Posterior cingulate gyrus (tissue), 11 donors: ENCODE measurements at regions of chr19 and their contacts with region 1.

Region 1: DNA sequence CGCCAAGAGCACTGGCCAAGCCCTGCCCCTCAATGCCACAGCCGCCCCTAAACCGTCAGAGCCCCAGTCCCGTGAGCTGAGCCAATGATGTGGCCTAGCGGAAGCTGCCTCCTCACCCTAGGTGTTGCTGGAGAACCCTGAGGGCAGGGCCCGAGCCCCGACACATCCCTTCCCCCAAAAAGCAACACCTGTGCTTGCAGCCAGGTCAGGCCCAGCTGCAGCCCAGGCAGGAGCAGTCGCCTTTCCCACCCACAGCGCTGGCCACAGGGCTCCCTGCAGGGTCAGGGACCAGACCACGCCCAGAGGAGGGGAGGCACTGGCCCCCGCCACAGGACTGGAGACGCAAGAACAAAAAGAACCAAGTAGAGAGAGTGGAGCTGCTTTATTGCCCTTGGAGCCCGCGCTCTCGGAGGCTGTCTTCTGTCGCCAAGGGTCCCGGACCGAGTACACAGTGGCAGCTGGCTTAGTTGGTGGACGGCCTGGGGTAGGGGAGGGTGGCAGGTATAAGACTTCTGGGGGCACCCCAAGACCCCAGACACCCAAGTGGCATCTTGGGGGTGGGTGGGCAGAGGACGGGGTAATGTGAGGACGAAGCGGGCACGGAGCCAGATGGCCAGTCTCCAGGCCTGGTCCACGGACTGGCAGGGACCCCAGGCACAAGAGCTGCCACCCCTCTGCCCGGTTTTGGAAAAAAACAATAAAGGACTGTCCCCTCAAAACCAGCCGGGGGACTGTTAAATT is 3.3 kb downstream of the P2RY11 start:
- DNase-seq: peak in 1 of 10 donors; percentile 79

Region 2: DNA sequence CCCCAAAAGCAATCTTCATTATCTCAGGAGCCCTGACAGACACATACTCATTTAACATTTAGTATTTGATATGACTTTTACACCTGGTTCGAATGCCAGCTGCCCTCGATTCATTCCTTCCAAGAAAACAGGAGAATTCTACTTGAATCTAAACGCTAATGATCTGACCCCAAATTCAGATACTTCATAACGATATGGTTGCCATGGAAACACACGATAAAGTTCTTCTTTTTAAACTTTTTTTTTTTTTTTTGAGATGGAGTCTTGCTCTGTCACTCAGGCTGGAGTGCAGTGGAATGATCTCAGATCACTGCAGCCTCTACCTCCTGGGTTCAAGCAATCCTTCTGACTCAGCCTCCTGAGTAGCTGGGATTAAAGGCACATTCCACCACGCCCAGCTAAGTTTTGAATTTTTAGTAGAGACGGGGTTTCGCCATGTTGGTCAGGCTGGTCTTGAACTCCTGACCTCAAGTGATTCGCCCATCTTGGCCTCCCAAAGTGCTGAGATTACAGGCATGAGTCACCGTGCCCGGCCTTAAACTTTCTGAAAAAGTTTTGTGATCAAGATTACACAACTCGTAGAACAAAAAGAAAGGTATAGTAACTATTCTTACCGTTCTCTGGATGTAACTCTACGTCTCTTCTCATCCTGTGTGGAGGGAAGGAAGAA is 58.6 kb after region 1 on chr19:
- intact Hi-C with region 1: no loop called
- DNase-seq: no peak

Region 3: DNA sequence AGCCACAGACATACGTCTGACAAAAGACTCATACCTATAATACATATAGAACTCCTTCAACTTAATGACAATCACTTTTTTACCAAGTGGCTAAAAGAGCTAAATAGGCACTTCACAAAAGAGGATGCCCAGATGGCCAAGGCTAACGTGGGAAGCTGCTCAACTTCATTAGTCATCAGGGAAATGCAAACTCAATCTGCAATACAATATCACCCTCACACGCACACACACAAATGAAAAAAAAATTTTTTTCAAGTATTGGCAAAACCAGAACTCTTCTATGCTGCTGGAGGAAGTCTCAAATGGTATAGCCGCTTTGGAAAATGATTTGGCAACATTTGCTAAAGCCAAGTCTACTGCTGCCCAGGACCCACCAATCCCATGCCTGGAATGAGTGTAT is 94.5 kb after region 1 on chr19:
- intact Hi-C with region 1: no loop called
- DNase-seq: peak in 1 of 10 donors; percentile 8

Region 4: DNA sequence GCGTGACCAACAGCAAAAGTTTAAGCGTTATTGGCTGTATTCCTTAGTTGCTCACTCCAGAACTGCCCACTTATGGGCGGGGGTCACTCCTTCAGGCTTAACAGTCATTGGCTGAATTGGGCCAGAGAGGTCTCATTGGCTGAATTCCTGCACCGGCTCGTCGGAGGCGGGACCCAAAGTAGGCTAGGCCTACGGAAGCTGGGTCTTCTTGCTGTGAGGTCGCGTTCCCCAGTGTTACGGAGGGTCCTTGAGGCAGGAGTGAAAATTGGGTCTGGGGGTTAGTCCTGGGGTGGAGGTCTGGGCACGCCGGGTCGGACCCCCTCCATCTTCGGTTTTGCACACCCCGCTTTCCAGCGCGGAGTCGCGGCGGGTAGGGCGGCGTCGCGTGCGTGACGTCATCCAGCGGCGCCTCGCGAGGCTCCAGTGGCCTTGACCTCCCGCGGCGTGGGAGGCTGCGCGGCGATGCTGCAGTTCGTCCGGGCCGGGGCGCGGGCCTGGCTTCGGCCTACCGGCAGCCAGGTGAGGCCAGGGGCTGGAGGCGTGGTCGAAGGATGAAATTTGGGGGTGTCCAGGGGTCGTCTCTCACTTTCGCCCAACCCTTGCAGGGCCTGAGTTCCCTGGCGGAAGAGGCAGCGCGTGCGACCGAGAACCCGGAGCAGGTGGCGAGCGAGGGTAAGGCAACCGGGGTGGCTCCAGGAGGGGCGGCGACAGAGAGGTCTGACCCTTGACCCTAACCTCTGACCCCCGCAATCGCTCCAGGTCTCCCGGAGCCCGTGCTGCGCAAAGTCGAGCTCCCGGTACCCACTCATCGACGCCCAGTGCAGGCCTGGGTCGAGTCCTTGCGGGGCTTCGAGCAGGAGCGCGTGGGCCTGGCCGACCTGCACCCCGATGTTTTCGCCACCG is 137.2 kb after region 1 on chr19 and contains the start of gene MRPL4:
- intact Hi-C with region 1: loop called (anchors 5 kb)
- DNase-seq: peak; percentile 89 to 99 (median 94)